ENCODE measurements at regions of chr12 and their contacts with region 1.

Region 1: DNA sequence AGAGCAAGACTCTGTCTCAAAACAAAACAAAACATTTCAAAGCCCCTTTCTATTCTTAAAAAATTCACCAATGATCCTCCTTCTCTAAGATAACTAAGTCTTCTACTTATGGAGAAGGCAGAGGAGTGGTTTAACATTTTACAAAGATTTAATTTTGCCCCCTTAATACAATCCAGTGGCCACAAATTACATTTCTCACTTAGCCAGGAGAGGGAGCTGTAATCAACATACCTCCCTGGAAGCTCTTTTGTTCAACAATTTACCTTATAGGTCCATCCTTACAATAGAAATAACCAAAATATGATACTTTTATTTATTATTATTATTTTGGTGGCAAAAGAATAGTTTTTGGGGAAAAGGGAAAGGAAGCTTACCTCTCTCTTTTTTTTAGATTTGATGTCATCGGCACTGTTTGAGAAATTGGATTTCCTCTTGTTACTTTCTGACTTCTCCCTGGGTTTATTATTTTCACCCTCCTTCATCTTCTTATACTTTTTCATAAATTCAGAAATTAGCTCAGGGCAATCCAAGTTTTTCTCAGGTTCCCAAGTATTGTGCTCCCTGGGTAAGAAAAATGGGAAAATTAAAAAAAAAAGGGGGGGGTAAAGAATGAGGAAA is 28.1 kb downstream of the CBX5 start:
- H3K4me3 Mint-ChIP-seq: no peak overlapping the region
- H3K27ac Mint-ChIP-seq: peak overlapping the region; percentile 64
- H3K4me1 Mint-ChIP-seq: peaks cover 8% of the 10 kb centered on the region
- H3K27me3 Mint-ChIP-seq: no peaks in the 10 kb centered on the region

Region 2: GRCh38 chr12:54279866-54280467 is 28.2 kb after region 1 on chr12 and contains the start of gene CBX5:
- intact Hi-C with region 1: loop called (anchors 1 kb)
- H3K4me3 Mint-ChIP-seq: no peak within 1 kb of the TSS
- H3K27ac Mint-ChIP-seq: no peak within 1 kb of the TSS
- H3K4me1 Mint-ChIP-seq: peaks cover 35% of the 10 kb centered on the region
- H3K27me3 Mint-ChIP-seq: no peaks in the 10 kb centered on the region

Measured in dendritic cell treated with granulocyte-macrophage colony-stimulating factor and Interleukin-4, amounts not matched to agents 40 ng/mL and 50 ng/mL, for 4 days (primary cell).